ENCODE measurements at regions of chr12 and their contacts with region 1.

Region 1: DNA sequence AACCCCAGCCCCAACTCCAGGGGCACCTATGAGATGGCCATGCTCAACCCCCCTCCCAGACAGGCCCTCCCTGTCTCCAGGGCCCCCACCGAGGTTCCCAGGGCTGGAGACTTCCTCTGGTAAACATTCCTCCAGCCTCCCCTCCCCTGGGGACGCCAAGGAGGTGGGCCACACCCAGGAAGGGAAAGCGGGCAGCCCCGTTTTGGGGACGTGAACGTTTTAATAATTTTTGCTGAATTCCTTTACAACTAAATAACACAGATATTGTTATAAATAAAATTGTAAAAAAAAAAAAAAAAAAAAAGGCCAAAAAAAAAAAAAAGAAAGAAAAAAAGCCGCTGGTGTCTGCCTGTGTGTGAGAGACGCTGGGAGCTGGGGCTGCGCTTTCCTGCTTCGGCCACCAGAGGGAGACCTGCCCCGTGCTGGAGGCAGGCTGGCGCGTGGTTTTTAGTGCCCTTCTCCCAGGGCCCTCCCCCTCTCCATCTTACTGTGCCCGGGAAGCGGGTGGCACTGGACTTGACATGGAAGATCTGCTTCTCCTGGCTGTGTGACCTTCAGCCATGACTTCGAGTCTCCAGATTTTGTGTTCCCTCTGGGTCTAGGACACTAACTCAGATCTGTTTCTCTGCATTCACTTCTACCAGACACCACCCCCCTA is 3.4 kb upstream of the NXPH4 start:
- DNase-seq: peak; percentile 85 to 94 (median 92)
- H3K4me3 ChIP-seq: peak overlapping the region in 3 of 59 donors; percentile 9 to 21 (median 18)
- H3K27ac ChIP-seq: peak overlapping the region in 44 of 59 donors; percentile 6 to 78 (median 50)
- H3K27me3 ChIP-seq: peaks cover 0 to 40% (median 24%) of the 10 kb centered on the region in 45 donors
- CTCF ChIP-seq: peak; percentile 79 to 98 (median 95)

Region 2: GRCh38 chr12:57238854-57239554 is 25.8 kb after region 1 on chr12:
- intact Hi-C with region 1: loop called (anchors 1 to 2 kb)
- DNase-seq: peak; percentile 75 to 89 (median 86)
- H3K4me3 ChIP-seq: peak overlapping the region; percentile 31 to 81 (median 67)
- H3K27ac ChIP-seq: peak overlapping the region in 52 of 59 donors; percentile 54 to 96 (median 87)
- H3K27me3 ChIP-seq: peaks cover 0 to 30% (median 0%) of the 10 kb centered on the region in 45 donors
- CTCF ChIP-seq: peak; percentile 85 to 100 (median 100)

Region 3: GRCh38 chr12:57248934-57249742 is 36.0 kb after region 1 on chr12:
- intact Hi-C with region 1: no loop called
- DNase-seq: no peak
- H3K4me3 ChIP-seq: peak overlapping the region in 1 of 59 donors; percentile 24
- H3K27ac ChIP-seq: no peak overlapping the region
- H3K27me3 ChIP-seq: no peaks in the 10 kb centered on the region
- CTCF ChIP-seq: no peak

Measured in dorsolateral prefrontal cortex (tissue), 120 donors.